ENCODE measurements at regions of chr2 and their contacts with region 1.

Region 1: GRCh38 chr2:128196471-128196931 is 105.5 kb downstream of the UGGT1 start:
- DNase-seq: peak; percentile 47
- ATAC-seq: peak; percentile 57
- H3K4me3 ChIP-seq: no peak overlapping the region
- H3K27ac ChIP-seq: peak overlapping the region; percentile 88
- H3K4me1 ChIP-seq: peaks cover 43% of the 10 kb centered on the region
- H3K27me3 ChIP-seq: no peaks in the 10 kb centered on the region
- CTCF ChIP-seq: no peak
- EP300 ChIP-seq: no peak
- POLR2A ChIP-seq: 0 out of 4 replicates have a peak, but pooled peaks of 1 of the 2 experiments have one; percentile 40
- RAD21 ChIP-seq: no peak

Region 2: GRCh38 chr2:128172191-128172590 is 24.3 kb before region 1 on chr2:
- CTCF ChIA-PET with region 1: no interaction called
- POLR2A ChIA-PET with region 1: interaction called, 10 read pairs
- in situ Hi-C with region 1: no loop called
- intact Hi-C with region 1: no loop called
- DNase-seq: peak; percentile 55
- ATAC-seq: peak; percentile 14; the same call in 2 of the 3 replicates
- H3K4me3 ChIP-seq: no peak overlapping the region
- H3K27ac ChIP-seq: peak overlapping the region; percentile 91
- H3K4me1 ChIP-seq: peaks cover 80% of the 10 kb centered on the region
- H3K27me3 ChIP-seq: no peaks in the 10 kb centered on the region
- CTCF ChIP-seq: peak; percentile 85
- EP300 ChIP-seq: 0 out of 4 replicates have a peak, but pooled peaks of 1 of the 2 experiments have one; percentile 6
- POLR2A ChIP-seq: no peak
- RAD21 ChIP-seq: no peak

Region 3: DNA sequence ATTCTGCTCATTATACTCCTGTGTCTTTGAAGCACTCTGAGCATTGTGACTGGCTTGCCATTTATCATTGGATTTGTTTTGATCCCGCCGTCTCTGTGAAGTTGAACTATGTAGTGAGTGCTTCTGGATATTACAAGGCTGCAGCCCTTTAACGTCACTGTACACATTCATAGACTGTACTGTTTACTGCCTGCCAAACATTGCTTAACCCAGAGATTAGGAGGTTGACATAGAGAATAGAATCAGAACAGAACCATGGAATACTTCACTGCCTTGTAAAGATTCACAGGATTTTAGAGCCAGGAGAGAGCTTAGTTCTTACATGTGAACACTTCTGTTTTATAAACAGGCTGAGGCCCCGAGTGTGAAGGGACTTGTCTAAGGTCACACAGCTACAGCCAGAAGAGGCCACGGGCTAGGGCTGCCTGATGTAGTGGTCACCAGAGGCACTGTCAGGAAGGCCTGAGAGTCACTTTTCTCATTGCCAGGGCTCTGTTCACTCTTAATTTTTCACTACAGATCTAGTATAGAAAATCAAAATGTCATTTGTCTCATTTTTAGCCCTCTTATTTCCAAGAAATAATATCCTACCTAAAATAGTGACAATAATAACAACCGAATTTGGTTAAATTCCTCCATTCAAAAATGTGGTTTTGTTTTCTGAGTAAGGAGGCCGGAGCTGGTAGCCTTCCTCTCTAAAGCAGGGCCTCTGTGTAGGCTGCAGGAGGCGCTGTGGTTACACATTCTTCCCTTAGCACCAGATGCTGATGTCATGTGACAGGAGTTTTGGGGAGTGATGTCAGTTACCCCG is 17.6 kb before region 1 on chr2:
- CTCF ChIA-PET with region 1: interaction called, 3 read pairs
- POLR2A ChIA-PET with region 1: interaction called, 12 read pairs
- in situ Hi-C with region 1: no loop called
- intact Hi-C with region 1: no loop called
- DNase-seq: peak; percentile 100
- ATAC-seq: peak; percentile 98
- H3K4me3 ChIP-seq: peak overlapping the region in 2 of 3 experiments; percentile 6 to 36; a peak in 2 of 6 replicates
- H3K27ac ChIP-seq: peak overlapping the region; percentile 93
- H3K4me1 ChIP-seq: peaks cover 50% of the 10 kb centered on the region
- H3K27me3 ChIP-seq: no peaks in the 10 kb centered on the region
- CTCF ChIP-seq: peak; percentile 91
- EP300 ChIP-seq: peak; percentile 93 to 99; a peak in 3 of 4 replicates
- POLR2A ChIP-seq: peak in 1 of 2 experiments; percentile 22; a peak in 1 of 4 replicates
- RAD21 ChIP-seq: peak; percentile 83

Region 4: GRCh38 chr2:128369108-128369555 is 172.6 kb after region 1 on chr2:
- CTCF ChIA-PET with region 1: no interaction called
- POLR2A ChIA-PET with region 1: no interaction called
- in situ Hi-C with region 1: no loop called
- intact Hi-C with region 1: no loop called
- DNase-seq: no peak
- ATAC-seq: no peak
- H3K4me3 ChIP-seq: no peak overlapping the region
- H3K27ac ChIP-seq: no peak overlapping the region
- H3K4me1 ChIP-seq: peaks cover 18% of the 10 kb centered on the region
- H3K27me3 ChIP-seq: peaks cover 13 to 45% of the 10 kb centered on the region in 2 experiments
- CTCF ChIP-seq: no peak
- EP300 ChIP-seq: no peak
- POLR2A ChIP-seq: no peak
- RAD21 ChIP-seq: no peak

Region 5: DNA sequence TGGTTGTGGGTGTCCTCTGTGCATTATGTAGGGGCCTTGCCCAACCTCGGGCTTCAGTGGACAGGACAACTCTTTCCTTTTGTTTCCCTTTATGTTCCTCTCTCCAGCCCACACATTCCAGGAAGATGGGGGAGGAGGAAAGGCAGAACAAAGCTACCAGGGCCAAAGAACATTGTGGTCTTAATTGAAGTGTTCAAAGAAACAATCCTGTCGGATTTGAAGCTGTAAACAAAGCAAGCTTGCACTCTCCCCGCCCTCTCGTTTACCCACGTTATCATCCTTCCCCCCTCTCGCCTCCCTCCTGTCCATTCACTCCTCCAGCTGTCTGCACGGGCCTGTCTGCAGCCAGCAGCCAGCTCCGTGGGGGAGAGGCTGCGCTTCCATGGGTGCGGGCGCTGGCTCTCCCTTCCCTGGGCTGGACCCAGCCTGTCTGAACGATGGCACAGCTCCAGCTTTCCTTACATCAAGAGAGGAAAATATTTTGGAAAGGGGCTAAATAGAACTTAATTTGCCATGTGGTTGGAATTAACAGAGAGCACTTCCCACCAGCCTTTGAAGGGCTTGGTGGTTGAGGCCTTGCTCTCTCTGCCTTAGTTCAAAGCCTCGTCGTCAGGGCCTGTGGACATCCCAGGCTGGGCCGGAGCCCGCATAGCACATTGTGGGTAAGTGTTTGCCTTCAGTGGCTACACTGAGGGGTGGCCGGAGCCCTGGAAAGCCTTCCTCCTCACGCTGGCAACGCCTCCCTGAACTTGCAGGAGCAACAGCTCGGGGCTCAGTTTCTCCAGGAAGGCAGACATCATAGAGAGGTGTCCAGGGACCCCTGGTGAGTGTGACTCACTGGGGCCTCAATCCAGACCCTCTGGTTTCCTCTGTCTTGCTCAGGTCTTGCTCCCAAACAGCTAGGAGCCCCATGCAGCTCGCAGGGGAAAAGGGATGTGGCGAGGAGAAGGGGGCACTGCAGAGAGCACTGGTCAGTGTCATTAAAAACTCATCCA is 182.8 kb after region 1 on chr2:
- CTCF ChIA-PET with region 1: no interaction called
- POLR2A ChIA-PET with region 1: no interaction called
- in situ Hi-C with region 1: no loop called
- intact Hi-C with region 1: no loop called
- DNase-seq: peak; percentile 90
- ATAC-seq: peak; percentile 76
- H3K4me3 ChIP-seq: peak overlapping the region in 2 of 3 experiments; percentile 21 to 61; a peak in 4 of 6 replicates
- H3K27ac ChIP-seq: no peak overlapping the region
- H3K4me1 ChIP-seq: peaks cover 62% of the 10 kb centered on the region
- H3K27me3 ChIP-seq: 0 out of 5 replicates have a peak, but pooled peaks cover 0 to 7% of the 10 kb centered on the region in 2 experiments
- CTCF ChIP-seq: no peak
- EP300 ChIP-seq: peak in 1 of 2 experiments; percentile 64; a peak in 1 of 4 replicates
- POLR2A ChIP-seq: no peak
- RAD21 ChIP-seq: no peak

Measured in HepG2 (cell line).